ENCODE measurements at regions of chr1 and their contacts with region 1.

Region 1: GRCh38 chr1:167066333-167067122 is 23.6 kb downstream of the GPA33 start:
- DNase-seq: no peak
- H3K4me3 ChIP-seq: peak overlapping the region; percentile 45
- CTCF ChIP-seq: peak; percentile 97

Region 2: GRCh38 chr1:166910396-166910994 is 156.0 kb before region 1 on chr1:
- CTCF ChIA-PET with region 1: interaction called, 380 read pairs
- POLR2A ChIA-PET with region 1: no interaction called
- DNase-seq: peak; percentile 17
- H3K4me3 ChIP-seq: no peak overlapping the region
- CTCF ChIP-seq: peak; percentile 63

Region 3: DNA sequence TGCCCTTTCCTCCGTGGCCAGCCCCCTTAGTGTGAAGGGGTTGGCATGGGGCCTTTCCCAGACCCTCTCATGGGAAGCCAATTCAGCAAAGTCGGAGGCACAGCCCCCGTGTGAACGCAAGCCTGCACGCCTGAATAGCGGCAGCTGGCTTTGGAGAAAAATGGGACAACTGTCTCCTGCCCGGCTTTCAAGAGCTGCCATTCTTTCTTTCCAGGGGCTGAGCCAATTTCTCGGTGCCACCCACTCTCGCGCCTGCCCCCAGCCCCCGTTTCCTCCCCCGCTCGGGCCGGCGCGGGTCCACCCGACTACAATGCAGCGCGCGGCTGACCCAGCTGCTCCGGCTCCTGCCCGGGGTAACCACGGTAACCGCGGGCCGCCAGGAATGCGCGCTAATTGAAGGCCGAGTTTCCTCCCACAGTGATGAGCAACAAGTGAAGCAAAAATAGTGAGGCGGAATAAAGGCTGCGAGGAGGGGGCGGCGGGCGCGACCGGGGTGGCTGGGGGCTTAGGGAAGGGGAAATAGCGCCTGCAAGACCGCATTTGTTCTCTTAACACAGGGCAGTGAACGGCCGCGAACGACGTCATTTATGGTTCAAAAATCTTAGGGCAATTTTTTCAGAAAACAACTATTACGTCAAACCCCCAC is 119.0 kb before region 1 on chr1:
- CTCF ChIA-PET with region 1: no interaction called
- POLR2A ChIA-PET with region 1: no interaction called
- DNase-seq: no peak
- H3K4me3 ChIP-seq: no peak overlapping the region; the same call in 1 of the 2 replicates
- CTCF ChIP-seq: no peak

Region 4: DNA sequence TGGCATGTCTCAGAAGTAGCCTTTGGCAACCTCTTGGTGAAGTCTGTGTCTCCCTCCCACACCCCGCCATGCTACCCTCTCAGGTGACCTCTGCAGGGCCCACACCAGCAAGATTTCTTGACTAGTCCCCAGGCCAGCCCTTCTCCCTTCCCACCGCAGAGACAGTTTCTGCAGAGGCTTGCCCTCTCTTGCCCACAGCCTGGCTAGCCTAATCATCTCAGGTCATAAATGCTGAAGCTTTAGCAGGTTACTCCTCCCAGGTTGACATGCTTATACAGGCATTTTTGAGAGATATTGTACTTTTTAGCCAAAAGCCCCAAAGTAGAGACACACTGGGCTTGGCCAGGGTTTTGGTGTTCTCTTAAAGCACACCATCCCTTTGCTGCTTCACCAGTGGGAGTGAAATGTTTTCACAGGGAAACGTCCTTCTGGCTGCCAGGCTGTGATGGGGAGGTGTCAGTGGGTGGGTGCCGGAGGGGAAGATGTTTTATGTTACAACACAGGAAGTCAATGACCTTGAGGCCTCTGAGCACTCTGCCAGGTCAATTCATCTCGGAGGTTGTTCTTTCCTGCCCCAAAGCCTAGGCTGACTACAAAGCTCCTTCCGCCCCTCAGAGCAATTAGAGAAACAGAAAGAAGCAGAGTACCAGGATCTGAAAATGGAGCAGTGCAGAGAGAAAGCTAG is 85.8 kb after region 1 on chr1:
- CTCF ChIA-PET with region 1: no interaction called
- POLR2A ChIA-PET with region 1: no interaction called
- DNase-seq: no peak
- H3K4me3 ChIP-seq: no peak overlapping the region
- CTCF ChIP-seq: no peak

Measured in AG04449 (cell line).